CD4-positive, alpha-beta memory T cell (primary cell): ENCODE measurements at regions of chr14 and their contacts with region 1.

Region 1: DNA sequence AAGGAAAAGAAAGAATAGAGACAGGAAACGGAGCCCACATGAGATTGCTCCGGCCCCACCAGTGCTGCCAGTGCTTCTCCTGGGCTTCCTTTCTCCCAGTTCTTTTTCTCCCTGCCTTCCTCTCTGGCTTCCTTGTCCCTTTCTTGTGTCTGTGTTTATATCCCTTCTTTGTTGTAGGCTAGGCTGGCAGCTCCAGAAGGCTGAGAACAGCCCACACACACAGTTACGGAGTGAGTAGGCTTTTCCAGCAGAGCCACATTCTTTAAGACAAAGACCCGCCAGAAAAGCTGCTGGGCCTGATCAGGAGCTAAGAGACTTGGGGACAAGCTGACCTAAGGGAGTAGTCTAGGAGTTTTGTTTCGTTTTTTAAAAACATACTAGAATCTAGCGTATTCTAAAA is 13.0 kb downstream of the CIPC start:
- DNase-seq: no peak
- H3K4me3 ChIP-seq: no peak overlapping the region
- H3K4me3 Mint-ChIP-seq: no peak overlapping the region
- H3K27ac ChIP-seq: no peak overlapping the region
- H3K27ac Mint-ChIP-seq: peak overlapping the region in 1 of 7 donors; percentile 9
- H3K4me1 ChIP-seq: no peaks in the 10 kb centered on the region
- H3K4me1 Mint-ChIP-seq: peaks cover 2 to 7% (median 5%) of the 10 kb centered on the region in 4 donors
- H3K27me3 ChIP-seq: no peaks in the 10 kb centered on the region
- H3K27me3 Mint-ChIP-seq: no peaks in the 10 kb centered on the region

Region 2: GRCh38 chr14:77124345-77125280 is 13.6 kb after region 1 on chr14:
- CTCF ChIA-PET with region 1: interaction called, 271 read pairs
- POLR2A ChIA-PET with region 1: interaction called, 22 read pairs
- intact Hi-C with region 1: loop called (anchors 1 kb)
- DNase-seq: peak; percentile 72 to 83 (median 79)
- H3K4me3 ChIP-seq: peak overlapping the region; percentile 66 to 82
- H3K4me3 Mint-ChIP-seq: peak overlapping the region; percentile 85 to 92 (median 88)
- H3K27ac ChIP-seq: peak overlapping the region; percentile 45
- H3K27ac Mint-ChIP-seq: peak overlapping the region; percentile 50 to 95 (median 91)
- H3K4me1 ChIP-seq: peaks cover 57% of the 10 kb centered on the region
- H3K4me1 Mint-ChIP-seq: peaks cover 17 to 59% (median 45%) of the 10 kb centered on the region in 4 donors
- H3K27me3 ChIP-seq: no peaks in the 10 kb centered on the region
- H3K27me3 Mint-ChIP-seq: peaks cover 6 to 13% of the 10 kb centered on the region in 2 donors